Heart left ventricle (tissue), 16 donors: ENCODE measurements at regions of chr17 and their contacts with region 1.

Region 1: GRCh38 chr17:64306850-64307463 is 43.9 kb upstream of the TEX2 start:
- DNase-seq: peak; percentile 52 to 79 (median 68)
- ATAC-seq: peak in 3 of 4 donors; percentile 29 to 67 (median 49)
- H3K4me3 ChIP-seq: no peak overlapping the region
- H3K27ac ChIP-seq: no peak overlapping the region
- H3K4me1 ChIP-seq: peaks cover 0 to 20% (median 10%) of the 10 kb centered on the region in 12 donors
- H3K27me3 ChIP-seq: no peaks in the 10 kb centered on the region
- CTCF ChIP-seq: peak; percentile 75 to 92 (median 86)
- POLR2A ChIP-seq: no peak

Region 2: GRCh38 chr17:64491034-64491859 is 184.3 kb after region 1 on chr17:
- intact Hi-C with region 1: loop called in 6 of 10 experiments (anchors 5 to 10 kb)
- DNase-seq: peak in 1 of 5 donors; percentile 29
- ATAC-seq: peak in 1 of 4 donors; percentile 61
- H3K4me3 ChIP-seq: no peak overlapping the region
- H3K27ac ChIP-seq: no peak overlapping the region
- H3K4me1 ChIP-seq: peaks cover 2 to 43% (median 17%) of the 10 kb centered on the region in 12 donors
- H3K27me3 ChIP-seq: no peaks in the 10 kb centered on the region
- CTCF ChIP-seq: peak; percentile 22 to 67 (median 49)
- POLR2A ChIP-seq: no peak

Region 3: DNA sequence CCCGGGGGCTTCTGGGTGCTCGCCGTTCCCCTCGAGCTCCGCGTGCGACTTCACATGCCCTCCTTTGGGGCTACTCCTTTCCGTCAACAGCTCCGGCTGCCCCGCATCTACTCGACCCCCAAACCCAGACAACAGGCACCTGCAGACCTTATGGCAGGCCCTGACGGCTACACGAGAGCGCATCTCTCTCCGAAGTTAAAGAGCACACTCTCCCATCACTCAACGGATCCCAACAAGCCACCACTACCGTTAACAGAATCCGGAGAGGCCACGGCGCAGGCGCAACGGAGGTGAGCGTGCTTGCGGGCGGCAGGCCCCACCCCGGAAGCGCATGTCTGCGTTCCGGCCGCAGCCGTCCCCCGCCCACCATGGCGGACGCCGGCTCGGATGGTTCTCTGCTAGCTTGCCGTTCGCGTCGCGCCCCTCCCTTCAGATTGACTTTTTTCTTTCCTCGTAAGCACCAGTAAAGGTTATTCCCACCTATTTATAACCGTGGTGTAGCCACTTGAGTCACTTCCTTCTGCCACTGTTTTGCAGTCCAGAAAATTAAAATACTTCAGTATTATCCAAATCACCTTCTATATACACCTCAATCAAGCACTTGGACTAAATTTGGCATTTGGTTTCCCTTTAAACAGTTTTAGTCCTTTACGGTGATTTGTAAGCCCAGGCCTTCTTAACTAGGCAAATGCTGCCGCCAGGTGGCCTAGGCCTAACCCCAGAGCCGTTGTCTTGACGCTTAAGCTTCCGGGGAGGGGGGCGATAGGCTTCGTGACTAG is 190.0 kb after region 1 on chr17 and contains the start of gene POLG2:
- intact Hi-C with region 1: loop called in 6 of 10 experiments (anchors 5 to 10 kb)
- DNase-seq: peak; percentile 92 to 97 (median 95)
- ATAC-seq: peak; percentile 93 to 98 (median 96)
- H3K4me3 ChIP-seq: peak within 1 kb of the TSS; percentile 44 to 89 (median 68)
- H3K27ac ChIP-seq: peak within 1 kb of the TSS; percentile 42 to 91 (median 83)
- H3K4me1 ChIP-seq: peaks cover 2 to 88% (median 50%) of the 10 kb centered on the region in 12 donors
- H3K27me3 ChIP-seq: no peaks in the 10 kb centered on the region
- CTCF ChIP-seq: peak in 11 of 12 donors; percentile 12 to 54 (median 32)
- POLR2A ChIP-seq: peak in 1 of 2 donors; percentile 63
- total RNA-seq, gene POLG2: 1.4 to 8.7 (median 5.7) TPM

Region 4: GRCh38 chr17:64506576-64507477 is 199.9 kb after region 1 on chr17 and contains the start of gene CEP95:
- intact Hi-C with region 1: loop called in 1 of 10 experiments (anchors 10 kb)
- DNase-seq: peak; percentile 96 to 97 (median 96)
- ATAC-seq: peak; percentile 82 to 89 (median 84)
- H3K4me3 ChIP-seq: peak within 1 kb of the TSS; percentile 77 to 99 (median 88)
- H3K27ac ChIP-seq: peak within 1 kb of the TSS; percentile 96 to 100 (median 99)
- H3K4me1 ChIP-seq: peaks cover 14 to 53% (median 49%) of the 10 kb centered on the region in 12 donors
- H3K27me3 ChIP-seq: no peaks in the 10 kb centered on the region
- CTCF ChIP-seq: no peak
- POLR2A ChIP-seq: peak in 1 of 2 donors; percentile 41
- total RNA-seq, gene CEP95: 9.4 to 25.1 (median 13.1) TPM